ENCODE measurements at regions of chr20 and their contacts with region 1.

Region 1: DNA sequence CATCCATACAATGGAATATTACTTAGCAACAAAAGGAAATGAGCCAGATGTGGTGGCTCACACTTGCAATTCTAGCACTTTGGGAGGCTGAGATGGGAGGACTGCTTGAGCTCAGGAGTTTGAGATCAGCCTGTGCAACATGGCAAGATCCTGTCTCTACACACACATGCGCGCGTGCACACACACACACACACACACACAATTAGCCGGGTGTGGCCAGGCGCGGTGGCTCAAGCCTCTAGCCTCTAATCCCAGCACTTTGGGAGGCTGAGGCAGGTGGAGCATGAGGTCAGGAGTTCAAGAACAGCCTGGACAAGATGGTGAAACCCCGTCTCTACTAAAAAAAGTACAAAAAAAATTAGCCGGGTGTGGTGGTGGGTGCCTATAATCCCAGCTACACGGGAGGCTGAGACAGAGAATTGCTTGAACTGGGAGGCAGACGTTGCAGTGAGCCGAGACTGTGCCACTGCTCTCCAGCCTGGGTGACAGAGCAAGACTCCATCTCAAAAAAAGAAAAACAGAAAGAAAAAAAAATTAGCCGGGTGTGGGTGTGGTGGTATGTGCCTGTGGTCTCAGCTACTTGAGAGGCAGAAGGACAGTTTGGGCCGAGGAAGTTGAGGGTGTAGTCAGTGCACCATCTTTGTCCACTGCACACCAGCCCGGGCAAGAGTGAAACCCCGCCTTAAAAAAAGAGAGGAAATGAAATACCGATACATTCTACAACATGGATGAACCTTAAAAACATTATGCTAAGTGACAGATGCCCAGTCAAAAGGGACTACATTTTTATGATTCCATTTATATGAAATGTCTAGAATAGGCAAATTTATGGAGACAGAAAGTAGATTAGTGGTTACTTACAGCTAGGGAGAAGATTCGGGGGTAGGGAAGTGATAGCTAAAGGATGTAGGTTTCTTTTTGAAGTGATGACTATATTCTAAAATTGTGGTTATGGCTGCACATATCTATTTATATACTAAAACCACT is 52.5 kb downstream of the RBL1 start:
- DNase-seq: no peak
- ATAC-seq: no peak
- H3K4me3 ChIP-seq: no peak overlapping the region
- H3K27ac ChIP-seq: no peak overlapping the region
- H3K4me1 ChIP-seq: no peaks in the 10 kb centered on the region
- H3K27me3 ChIP-seq: no peaks in the 10 kb centered on the region
- CTCF ChIP-seq: no peak

Region 2: GRCh38 chr20:36377352-36378326 is 665.6 kb before region 1 on chr20:
- CTCF ChIA-PET with region 1: no interaction called
- POLR2A ChIA-PET with region 1: no interaction called
- in situ Hi-C with region 1: no loop called
- intact Hi-C with region 1: no loop called
- DNase-seq: no peak
- ATAC-seq: no peak
- H3K4me3 ChIP-seq: no peak overlapping the region
- H3K27ac ChIP-seq: no peak overlapping the region
- H3K4me1 ChIP-seq: no peaks in the 10 kb centered on the region
- H3K27me3 ChIP-seq: peaks cover 2% of the 10 kb centered on the region; the same call in 1 of the 2 replicates
- CTCF ChIP-seq: no peak

Region 3: DNA sequence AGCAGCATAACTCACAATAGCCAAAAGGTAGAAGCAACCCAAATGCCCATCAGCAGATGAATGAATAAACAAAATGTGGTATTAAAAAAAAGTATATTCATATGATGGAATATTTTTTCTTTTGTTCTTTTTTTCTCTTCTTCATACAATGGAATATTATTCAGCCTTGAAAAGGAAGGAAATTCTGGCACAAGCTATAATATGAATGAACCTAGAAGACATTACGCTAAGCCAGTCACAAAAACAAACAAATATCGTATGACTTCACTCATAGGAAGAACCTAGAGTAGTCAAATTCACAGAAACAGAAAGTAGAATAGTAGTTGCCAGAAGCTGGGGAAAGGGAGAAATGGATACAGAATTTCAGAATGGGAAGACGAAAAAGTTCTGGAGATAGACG is 11.2 kb before region 1 on chr20:
- CTCF ChIA-PET with region 1: no interaction called
- POLR2A ChIA-PET with region 1: interaction called, 13 read pairs
- in situ Hi-C with region 1: no loop called
- intact Hi-C with region 1: no loop called
- DNase-seq: no peak
- ATAC-seq: no peak
- H3K4me3 ChIP-seq: no peak overlapping the region
- H3K27ac ChIP-seq: no peak overlapping the region
- H3K4me1 ChIP-seq: no peaks in the 10 kb centered on the region
- H3K27me3 ChIP-seq: no peaks in the 10 kb centered on the region
- CTCF ChIP-seq: no peak